Cardiac septum (tissue), 1 donor: ENCODE measurements at regions of chr10 and their contacts with region 1.

Region 1: DNA sequence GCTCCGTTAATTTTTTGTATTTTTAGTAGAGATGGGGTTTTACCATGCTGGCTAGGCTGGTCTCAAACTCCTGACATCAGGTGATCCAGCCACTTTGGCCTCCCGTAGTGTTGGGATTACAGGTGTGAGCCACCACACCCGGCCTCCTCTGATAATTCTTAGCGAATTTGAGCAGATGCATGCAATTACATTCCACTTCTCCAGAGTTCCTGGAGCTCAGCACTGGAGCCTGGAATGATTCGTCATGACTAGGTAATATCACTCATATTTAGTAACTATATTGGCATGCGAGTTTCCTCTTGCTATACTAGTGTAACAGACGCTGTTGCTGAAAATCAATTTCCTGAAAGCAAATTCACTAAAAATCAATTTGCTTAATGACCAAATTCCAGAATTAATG is 86.8 kb downstream of the MKX start:
- DNase-seq: no peak

Region 2: GRCh38 chr10:26516540-26517101 is 1142.2 kb before region 1 on chr10:
- intact Hi-C with region 1: no loop called
- DNase-seq: no peak

Region 3: GRCh38 chr10:27426948-27427467 is 231.8 kb before region 1 on chr10:
- intact Hi-C with region 1: no loop called
- DNase-seq: no peak

Region 4: GRCh38 chr10:27446091-27446918 is 212.5 kb before region 1 on chr10:
- intact Hi-C with region 1: loop called (anchors 10 kb)
- DNase-seq: no peak

Region 5: GRCh38 chr10:27558612-27559020 is 100.2 kb before region 1 on chr10:
- intact Hi-C with region 1: loop called (anchors 5 kb)
- DNase-seq: no peak

Region 6: GRCh38 chr10:27646224-27647175 is 12.3 kb before region 1 on chr10:
- intact Hi-C with region 1: no loop called
- DNase-seq: no peak